Activated CD4-positive, alpha-beta T cell treated with anti-CD3 and anti-CD28 coated beads for 36 hours (primary cell): ENCODE measurements at regions of chr5 and their contacts with region 1.

Region 1: GRCh38 chr5:16666883-16667398 is 50.1 kb upstream of the RETREG1 start:
- DNase-seq: peak; percentile 52
- ATAC-seq: peak; percentile 70
- H3K4me3 Mint-ChIP-seq: no peak overlapping the region
- H3K27ac Mint-ChIP-seq: no peak overlapping the region
- H3K4me1 Mint-ChIP-seq: peaks cover 3% of the 10 kb centered on the region
- H3K27me3 Mint-ChIP-seq: no peaks in the 10 kb centered on the region

Region 2: DNA sequence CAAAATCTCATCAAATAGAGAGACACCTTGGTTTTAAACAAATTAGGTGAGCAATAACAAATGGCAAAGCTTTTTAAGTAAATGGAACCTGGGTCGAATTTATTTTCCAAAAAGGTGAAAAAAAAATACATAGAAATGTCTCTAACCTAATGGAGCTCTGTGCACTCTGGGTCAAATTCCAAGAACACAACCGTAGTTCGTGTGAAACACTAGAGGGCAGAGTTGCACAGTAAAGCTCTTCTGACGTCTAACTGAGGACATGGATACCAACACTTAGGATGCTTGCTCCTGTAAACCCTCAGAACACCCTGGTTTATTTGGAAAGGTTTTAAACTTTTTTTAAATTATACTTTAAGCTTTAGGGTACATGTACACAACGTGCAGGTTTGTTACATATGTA is 506.2 kb before region 1 on chr5:
- CTCF ChIA-PET with region 1: no interaction called
- POLR2A ChIA-PET with region 1: no interaction called
- intact Hi-C with region 1: loop called in 1 of 2 experiments (anchors 2 kb)
- DNase-seq: peak; percentile 35
- ATAC-seq: peak; percentile 63
- H3K4me3 Mint-ChIP-seq: no peak overlapping the region
- H3K27ac Mint-ChIP-seq: no peak overlapping the region
- H3K4me1 Mint-ChIP-seq: no peaks in the 10 kb centered on the region
- H3K27me3 Mint-ChIP-seq: no peaks in the 10 kb centered on the region

Region 3: DNA sequence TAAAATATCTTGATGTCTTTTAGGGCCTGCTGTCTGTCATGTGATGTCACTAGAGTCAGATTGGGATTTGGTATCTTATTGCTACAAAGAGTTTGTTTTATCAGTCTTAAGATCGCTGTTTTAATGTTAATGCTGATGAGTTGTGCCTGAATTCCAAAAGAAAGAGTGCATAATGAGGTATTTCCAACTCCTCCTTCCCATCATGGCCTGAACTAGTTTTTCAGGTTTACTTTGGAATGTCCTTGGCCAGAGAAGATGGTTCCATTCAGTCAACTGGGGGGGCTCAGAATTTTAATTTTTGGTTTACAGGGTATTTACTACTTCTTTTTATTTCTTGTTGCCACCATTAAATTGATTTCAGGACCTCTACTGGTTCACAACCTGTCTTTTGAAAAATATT is 413.1 kb before region 1 on chr5:
- CTCF ChIA-PET with region 1: no interaction called
- POLR2A ChIA-PET with region 1: no interaction called
- intact Hi-C with region 1: no loop called
- DNase-seq: no peak
- ATAC-seq: no peak
- H3K4me3 Mint-ChIP-seq: no peak overlapping the region
- H3K27ac Mint-ChIP-seq: no peak overlapping the region
- H3K4me1 Mint-ChIP-seq: no peaks in the 10 kb centered on the region
- H3K27me3 Mint-ChIP-seq: no peaks in the 10 kb centered on the region

Region 4: DNA sequence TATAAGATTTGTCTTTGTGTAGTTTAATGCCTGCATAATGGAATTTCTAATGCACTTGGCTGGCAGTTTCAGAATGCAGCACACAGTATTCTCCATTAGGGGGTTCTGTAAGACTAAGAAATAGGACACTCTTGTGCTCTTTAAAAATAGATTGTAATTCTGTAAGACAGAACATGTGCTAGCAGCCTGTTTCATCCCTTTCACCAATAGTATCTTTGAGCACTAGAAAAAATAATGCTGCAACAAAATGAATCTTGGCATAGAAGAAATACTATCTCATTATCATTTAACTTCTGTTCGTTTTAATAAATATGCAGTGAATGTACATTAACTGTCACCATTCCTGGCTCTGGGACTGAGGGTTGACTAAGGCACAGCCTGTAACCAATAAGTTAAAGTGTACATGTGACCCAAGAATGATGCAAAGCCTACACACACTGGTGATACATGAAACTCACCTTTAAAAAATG is 177.6 kb before region 1 on chr5:
- CTCF ChIA-PET with region 1: interaction called, 16 read pairs
- POLR2A ChIA-PET with region 1: no interaction called
- intact Hi-C with region 1: loop called (anchors 1 to 5 kb)
- DNase-seq: no peak
- ATAC-seq: peak; percentile 67
- H3K4me3 Mint-ChIP-seq: no peak overlapping the region
- H3K27ac Mint-ChIP-seq: peak overlapping the region; percentile 10
- H3K4me1 Mint-ChIP-seq: peaks cover 26% of the 10 kb centered on the region
- H3K27me3 Mint-ChIP-seq: no peaks in the 10 kb centered on the region

Region 5: DNA sequence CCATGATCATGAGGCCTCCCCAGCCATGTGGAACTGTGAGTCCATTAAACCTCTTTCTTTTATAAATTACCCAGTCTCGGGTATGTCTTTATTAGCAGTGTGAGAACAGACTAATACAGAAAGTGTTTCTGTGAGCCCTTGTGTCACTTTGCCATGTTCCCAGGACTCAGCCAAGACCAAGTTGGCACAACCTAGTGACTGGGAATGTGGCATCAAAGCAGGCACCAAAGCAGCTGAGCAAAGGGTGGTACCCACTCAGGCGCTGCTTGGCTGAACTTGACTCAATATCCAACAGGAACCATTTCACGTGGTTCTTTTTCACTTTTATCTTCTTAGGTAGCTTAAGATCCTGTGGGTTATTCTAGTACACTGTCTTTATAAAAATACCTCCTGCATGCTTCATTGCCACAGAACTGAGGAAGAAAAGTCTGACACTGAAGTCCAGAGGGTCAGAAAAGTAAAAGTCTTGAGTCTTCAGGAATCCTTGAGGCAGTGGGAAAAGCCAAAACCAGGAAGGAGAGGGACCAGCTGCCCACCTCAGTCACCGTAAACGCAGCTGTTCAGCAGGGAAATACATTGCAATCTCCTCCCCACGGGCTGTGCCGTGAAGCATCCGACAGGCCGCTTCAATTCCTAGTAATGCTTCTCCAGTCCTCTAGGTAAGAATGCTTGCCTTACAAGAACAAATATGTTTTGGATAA is 40.4 kb after region 1 on chr5:
- CTCF ChIA-PET with region 1: no interaction called
- POLR2A ChIA-PET with region 1: no interaction called
- intact Hi-C with region 1: no loop called
- DNase-seq: no peak
- ATAC-seq: no peak
- H3K4me3 Mint-ChIP-seq: no peak overlapping the region
- H3K27ac Mint-ChIP-seq: no peak overlapping the region
- H3K4me1 Mint-ChIP-seq: no peaks in the 10 kb centered on the region
- H3K27me3 Mint-ChIP-seq: peaks cover 6% of the 10 kb centered on the region

Region 6: DNA sequence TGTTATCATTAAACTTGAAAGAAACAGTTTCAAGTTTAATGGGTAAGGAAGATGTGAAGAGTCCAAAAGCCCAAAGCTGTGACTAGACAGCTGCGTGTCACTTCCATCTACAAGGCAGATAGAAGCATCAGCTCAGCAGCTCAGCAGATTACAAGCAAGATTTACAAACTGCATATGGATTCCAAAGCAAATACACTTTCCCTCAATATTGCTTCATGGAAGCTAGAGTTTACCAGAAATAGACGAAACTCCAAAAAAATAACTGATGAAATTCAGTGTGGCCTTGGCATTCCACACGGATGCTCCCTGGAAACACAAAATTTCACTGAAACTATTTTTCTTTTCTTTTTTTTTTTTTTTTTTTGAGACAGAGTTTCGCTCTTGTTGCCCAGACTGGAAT is 251.2 kb after region 1 on chr5:
- CTCF ChIA-PET with region 1: no interaction called
- POLR2A ChIA-PET with region 1: interaction called, 11 read pairs
- intact Hi-C with region 1: no loop called
- DNase-seq: no peak
- ATAC-seq: no peak
- H3K4me3 Mint-ChIP-seq: no peak overlapping the region
- H3K27ac Mint-ChIP-seq: no peak overlapping the region
- H3K4me1 Mint-ChIP-seq: peaks cover 2% of the 10 kb centered on the region
- H3K27me3 Mint-ChIP-seq: peaks cover 3% of the 10 kb centered on the region